ENCODE measurements at regions of chr17 and their contacts with region 1.

Region 1: GRCh38 chr17:49997791-49998703 is 3.0 kb upstream of the DLX3 start:
- DNase-seq: peak; percentile 77
- ATAC-seq: peak; percentile 78 to 80

Region 2: DNA sequence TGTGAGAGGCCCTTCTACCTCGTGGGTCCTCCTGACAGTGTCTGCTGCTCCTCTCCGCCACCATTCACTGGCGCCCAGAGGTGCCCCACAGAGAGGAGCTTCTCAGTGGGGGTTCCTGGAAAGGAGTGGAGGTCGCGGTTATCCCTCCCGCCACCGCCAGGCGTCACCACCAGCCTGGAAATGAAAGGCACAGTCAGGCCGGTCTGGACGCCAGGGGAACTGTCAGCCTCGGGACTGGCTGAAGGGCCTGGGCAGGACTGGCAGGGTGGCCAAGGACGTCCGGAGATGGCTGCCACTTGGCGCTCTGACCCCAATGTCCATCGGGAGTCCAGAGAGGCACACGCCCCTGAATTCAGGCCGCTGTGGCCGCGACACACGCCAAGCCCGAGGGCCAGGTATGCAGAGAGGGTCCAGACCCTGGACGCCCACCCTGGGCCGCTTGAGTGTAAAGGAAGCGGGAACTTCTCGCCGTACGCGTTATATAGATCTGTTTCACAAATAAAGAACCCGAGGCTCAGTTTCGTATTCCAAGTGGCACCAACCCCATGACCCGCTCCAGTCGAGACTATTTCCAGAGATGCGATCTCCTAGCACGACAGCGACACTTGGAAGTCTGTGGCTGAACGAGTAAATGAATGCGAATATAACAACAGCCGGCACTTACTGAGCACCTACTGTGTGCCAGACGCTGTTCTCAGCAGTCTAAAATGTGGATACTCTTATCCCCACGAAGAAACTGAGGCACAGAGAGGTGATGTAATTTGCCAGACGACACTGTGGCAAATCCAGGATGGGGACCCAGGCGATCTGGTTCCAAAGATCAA is 430.0 kb before region 1 on chr17:
- intact Hi-C with region 1: loop called (anchors 5 kb)
- DNase-seq: peak; percentile 91
- ATAC-seq: peak; percentile 81 to 84

Region 3: DNA sequence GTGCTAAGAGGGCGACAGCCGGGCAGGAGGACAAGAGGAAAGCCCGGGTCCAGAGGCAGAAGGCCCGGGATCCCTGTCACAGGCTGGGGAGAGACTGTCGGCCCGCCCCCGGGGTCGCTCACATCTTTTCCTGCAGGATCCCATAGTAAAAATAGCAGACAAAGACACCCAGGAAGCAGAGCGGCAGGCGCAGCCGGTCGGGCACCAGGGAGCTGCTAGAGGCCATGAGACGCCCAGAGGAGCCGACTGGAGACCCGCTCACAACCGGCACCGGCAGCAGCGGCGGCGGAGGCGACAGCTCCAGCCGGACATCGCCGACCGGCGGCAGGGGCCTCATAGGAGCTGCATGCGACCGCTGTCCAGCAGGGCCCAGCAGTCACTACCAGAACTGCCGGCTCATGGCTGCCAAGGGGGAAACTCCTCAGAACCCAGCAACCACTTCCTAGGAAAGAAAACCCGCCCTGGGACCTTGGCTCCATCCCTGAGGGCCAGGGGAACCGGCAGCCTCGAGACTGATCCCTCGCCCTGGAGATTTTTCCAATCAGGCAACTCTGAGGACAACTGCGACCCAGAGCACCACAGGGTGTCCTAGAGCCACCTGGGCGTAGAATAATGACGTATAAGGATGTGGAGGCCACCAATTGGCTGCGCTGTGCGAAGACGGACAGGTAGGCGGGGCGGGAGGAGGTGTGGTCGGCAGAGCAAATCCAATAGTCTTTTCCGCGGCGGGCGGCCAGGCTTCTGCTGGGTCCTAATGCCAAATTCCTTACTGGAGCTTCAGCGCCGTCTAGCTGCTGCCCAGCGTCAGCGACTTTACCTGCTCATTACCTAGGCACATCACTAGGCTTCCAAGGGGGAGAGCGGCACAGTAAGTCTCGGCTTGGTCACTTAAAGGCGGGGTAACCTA is 290.2 kb before region 1 on chr17 and contains the start of gene SLC35B1:
- intact Hi-C with region 1: loop called in 1 of 2 experiments (anchors 5 kb)
- DNase-seq: peak; percentile 99
- ATAC-seq: peak; percentile 99 to 100
- total RNA-seq, gene SLC35B1: 48.8 to 78.8 TPM

Region 4: DNA sequence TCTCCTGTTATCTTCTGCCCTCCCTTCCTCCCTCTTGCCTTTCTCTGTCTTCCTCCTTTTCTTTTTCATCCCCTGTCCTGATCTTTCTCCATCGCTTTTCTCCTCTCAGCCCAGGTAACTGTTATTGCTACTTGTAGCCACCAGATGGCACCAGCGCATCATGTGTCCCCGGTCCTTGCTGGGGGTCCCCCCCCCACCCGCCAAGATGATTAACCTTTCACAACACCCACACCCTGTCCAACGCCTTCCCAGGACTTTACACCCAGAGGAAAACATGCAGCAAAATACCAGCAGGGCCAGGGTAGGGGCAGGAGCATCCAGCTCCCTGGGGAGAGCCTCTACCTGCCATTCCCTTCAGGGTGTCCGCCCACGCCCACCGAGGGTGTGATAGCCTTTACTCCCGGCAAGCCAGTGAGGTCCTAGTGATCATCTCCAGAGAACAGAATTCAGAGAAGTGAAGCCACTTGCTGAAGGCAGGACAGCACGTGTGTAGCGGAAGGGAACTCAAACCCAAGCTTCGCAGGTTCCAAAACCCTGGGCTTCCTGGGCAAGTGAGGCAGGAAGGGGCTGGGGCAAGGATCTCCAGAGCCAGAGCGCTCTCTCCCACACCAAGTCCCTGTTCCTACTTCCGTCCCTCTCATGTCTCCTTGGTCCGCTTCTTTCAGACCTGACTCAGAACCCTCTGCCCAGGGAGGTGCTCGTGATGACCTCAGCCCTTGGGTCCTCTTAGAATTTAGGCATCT is 136.7 kb before region 1 on chr17:
- intact Hi-C with region 1: loop called (anchors 1 to 2 kb)
- DNase-seq: peak; percentile 54
- ATAC-seq: peak; percentile 38

Region 5: DNA sequence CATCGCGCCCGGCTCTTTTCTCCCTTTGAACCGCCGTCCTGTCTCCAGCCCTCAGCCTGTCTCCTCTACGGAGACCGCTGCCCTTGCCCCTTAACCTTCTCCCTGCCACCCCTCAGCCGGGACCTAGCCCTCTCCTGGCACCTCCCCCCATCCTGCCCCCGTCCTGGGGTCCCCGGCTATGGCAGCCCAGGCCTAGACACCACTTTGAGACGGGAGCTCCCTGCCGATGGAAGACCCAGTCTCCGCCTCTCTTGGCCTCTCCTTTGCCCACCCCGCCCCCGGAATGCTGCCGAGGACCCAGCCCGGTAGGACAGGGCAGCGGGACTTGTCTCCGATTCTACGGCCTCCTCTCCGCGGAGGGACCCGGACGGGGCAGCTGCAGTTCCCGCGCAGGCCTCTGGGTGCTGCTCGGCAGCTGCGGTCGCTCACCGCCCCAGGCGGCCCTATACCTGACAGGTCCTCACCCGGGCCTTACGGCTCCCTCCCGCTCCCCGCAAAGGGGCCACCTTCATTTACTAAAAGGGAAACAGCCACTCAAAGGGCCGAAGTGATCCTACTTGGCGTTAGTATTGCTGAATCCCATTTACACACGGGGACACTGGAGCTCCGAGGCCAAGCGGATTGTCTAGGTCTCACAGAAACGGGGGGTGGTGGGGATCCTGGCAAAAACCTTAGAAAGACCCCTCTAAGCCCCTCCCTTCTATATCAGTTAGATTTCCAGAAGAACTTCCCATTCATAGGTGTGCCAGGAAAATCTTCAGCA is 117.6 kb before region 1 on chr17:
- intact Hi-C with region 1: loop called (anchors 1 to 5 kb)
- DNase-seq: peak; percentile 76
- ATAC-seq: peak; percentile 96

Region 6: DNA sequence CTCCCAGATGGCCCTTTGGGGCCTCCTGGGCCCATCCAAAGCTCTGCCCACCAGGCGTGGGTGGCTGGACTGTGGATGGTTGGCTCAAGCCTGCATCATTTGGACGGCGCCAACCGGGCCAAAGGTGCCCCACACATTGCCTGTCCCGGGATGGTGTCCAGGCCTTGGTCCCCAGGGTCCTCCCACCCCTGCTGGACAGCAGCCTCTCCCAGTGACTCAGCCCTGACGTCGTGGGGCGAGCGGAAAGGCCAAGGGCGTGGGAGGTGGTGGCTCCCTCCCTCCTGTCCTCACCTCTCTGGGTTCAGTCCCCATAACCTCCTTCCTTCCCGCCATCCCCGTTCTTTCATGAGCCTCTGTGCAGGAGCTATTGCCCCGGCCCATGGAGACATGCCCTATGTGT is 71.2 kb before region 1 on chr17:
- intact Hi-C with region 1: no loop called
- DNase-seq: peak; percentile 83
- ATAC-seq: peak; percentile 83 to 91

Region 7: GRCh38 chr17:49952209-49952911 is 45.7 kb before region 1 on chr17:
- intact Hi-C with region 1: loop called in 1 of 2 experiments (anchors 5 kb)
- DNase-seq: peak; percentile 78
- ATAC-seq: peak; percentile 72 to 90

Region 8: DNA sequence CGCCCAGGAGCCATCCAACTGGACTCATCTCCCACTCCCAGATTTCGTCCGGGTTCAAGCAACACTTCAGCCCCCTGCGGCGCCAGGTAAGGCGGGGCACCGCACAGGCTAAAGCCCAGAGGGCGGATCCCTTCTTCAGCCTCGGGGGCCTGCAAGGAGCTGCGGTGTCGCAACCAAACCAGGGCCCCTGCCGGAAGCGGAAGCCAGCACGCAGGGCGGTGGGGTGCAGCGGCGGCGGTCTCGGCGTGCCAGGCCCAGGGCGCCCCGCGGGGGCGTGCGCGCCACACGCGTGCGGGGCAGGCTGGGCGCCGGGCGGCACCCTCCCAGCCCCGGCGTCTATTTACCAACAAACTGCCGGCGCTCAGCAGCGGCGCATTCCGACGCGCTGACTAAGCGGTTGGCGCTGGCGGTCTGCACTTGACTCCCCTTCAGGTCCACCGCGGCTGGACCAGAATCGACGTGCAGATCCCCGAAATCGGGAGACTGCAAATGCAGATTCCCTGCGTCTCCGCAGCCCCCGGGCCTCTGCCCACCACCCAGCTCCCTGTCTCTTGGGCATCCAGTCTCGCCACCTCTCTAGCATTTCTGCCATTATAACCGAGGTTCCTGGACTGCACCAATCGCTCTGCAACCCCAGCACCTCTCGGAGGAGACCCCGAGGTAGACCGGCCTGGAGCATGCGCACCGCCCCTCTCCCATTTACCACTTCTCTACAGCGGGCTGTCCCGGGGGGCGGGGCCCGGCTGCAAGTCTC is 29.5 kb before region 1 on chr17:
- intact Hi-C with region 1: no loop called
- DNase-seq: peak; percentile 75
- ATAC-seq: peak; percentile 68 to 83

Measured in left cardiac atrium (tissue), 4 donors.